ENCODE measurements at regions of chr19 and their contacts with region 1.

Region 1: DNA sequence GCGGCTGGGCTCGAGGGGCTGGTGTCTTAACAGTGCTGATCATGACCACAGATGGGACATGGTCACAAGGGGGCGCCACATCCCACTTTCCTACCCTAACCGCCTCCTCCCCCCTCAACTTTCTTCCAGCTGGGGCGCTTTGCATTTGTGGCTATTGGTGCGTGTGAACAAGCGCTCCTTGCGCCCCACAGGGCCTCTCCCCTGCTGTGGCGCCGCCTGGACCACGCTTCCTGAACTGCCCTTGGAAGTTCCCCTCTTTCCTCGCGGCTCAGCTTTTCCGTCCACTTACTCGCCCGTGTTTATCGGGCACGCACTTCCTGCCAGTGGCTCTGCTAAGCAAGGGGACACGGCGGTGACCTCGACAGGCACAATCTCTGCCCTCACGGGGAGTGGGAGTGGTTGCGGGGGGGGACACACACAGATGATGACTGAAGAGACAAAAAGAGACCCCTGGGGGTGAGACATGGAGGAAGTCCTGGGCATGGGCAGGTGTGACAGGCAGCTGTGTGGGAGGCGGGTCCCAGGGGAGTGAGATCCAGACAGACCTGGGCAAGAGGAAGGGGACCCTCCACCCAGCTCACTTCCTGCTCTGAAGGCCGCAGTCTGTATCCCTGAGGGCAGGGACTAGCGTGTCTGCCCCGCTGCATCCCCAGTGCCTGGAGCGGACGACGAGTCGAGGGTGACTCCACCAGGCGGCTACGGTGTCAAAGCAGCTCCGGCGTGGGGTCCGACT is 40.3 kb downstream of the ZNF787 start:
- DNase-seq: peak; percentile 46 to 77 (median 67)
- ATAC-seq: peak; percentile 67
- H3K4me3 ChIP-seq: peak overlapping the region; percentile 41 to 46
- H3K4me3 Mint-ChIP-seq: peak overlapping the region; percentile 76
- H3K27ac ChIP-seq: no peak overlapping the region
- H3K27ac Mint-ChIP-seq: no peak overlapping the region
- H3K4me1 ChIP-seq: peaks cover 8% of the 10 kb centered on the region
- H3K4me1 Mint-ChIP-seq: peaks cover 9% of the 10 kb centered on the region
- H3K27me3 ChIP-seq: no peaks in the 10 kb centered on the region
- H3K27me3 Mint-ChIP-seq: peaks cover 12% of the 10 kb centered on the region
- CTCF ChIP-seq: no peak

Region 2: DNA sequence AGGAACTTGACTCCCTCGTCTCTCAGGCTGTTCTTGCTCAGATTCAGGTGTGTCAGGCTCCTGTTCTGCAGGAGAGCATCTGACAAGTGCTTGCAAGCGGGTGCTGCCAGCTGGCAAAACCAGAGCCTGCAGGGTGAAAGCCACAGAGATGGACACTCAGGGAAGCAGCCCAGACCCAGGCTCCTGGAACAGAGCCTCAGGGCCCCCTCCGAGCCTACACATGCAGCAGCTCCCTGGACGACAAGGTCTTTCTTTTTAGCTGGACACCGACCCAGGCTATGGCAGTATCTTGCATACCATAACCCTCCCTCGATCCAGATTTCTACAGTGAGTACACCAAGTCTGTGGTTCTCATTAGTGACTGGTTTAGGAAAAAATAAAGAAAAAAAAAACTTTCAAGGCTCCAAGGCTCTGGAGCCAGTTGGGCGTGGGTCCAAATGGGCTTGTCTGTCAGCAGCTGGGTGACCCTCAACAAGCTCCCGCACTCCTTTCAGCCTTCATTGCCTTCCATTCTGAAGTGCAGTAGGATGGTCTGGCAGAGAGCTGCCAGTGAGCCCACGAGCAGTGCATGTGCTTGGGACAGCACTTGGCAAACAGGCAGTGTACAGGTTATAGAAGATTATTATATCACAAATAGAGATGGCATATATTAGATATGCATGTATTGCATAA is 178.6 kb before region 1 on chr19:
- CTCF ChIA-PET with region 1: no interaction called
- POLR2A ChIA-PET with region 1: no interaction called
- intact Hi-C with region 1: no loop called
- DNase-seq: no peak
- ATAC-seq: no peak
- H3K4me3 ChIP-seq: no peak overlapping the region
- H3K4me3 Mint-ChIP-seq: no peak overlapping the region
- H3K27ac ChIP-seq: no peak overlapping the region
- H3K27ac Mint-ChIP-seq: no peak overlapping the region
- H3K4me1 ChIP-seq: no peaks in the 10 kb centered on the region
- H3K4me1 Mint-ChIP-seq: no peaks in the 10 kb centered on the region
- H3K27me3 ChIP-seq: no peaks in the 10 kb centered on the region
- H3K27me3 Mint-ChIP-seq: peaks cover 3% of the 10 kb centered on the region
- CTCF ChIP-seq: no peak

Region 3: DNA sequence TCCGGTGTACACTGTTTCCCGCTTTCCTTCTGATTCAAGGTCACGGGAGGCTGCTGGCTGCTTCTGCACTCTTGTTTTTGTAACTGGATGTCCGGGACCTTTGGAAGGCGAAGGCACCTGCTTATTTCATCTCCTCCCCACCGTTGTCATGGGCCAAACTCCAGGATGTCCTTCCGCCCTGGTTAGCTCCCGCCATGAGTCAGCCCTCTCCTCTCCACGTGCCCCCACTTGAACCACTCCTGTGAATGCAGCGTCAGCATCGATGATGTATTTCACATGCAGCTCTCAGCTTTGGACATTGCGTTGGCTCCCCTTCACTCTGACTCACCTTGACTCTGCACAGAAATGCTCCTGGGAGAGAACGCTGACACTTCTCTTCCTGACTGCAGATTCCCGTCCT is 89.4 kb after region 1 on chr19:
- CTCF ChIA-PET with region 1: interaction called, 36 read pairs
- POLR2A ChIA-PET with region 1: no interaction called
- intact Hi-C with region 1: loop called (anchors 1 to 2 kb)
- DNase-seq: no peak
- ATAC-seq: no peak
- H3K4me3 ChIP-seq: no peak overlapping the region
- H3K4me3 Mint-ChIP-seq: no peak overlapping the region
- H3K27ac ChIP-seq: no peak overlapping the region
- H3K27ac Mint-ChIP-seq: no peak overlapping the region
- H3K4me1 ChIP-seq: no peaks in the 10 kb centered on the region
- H3K4me1 Mint-ChIP-seq: peaks cover 2% of the 10 kb centered on the region
- H3K27me3 ChIP-seq: no peaks in the 10 kb centered on the region
- H3K27me3 Mint-ChIP-seq: peaks cover 8% of the 10 kb centered on the region
- CTCF ChIP-seq: no peak

Region 4: DNA sequence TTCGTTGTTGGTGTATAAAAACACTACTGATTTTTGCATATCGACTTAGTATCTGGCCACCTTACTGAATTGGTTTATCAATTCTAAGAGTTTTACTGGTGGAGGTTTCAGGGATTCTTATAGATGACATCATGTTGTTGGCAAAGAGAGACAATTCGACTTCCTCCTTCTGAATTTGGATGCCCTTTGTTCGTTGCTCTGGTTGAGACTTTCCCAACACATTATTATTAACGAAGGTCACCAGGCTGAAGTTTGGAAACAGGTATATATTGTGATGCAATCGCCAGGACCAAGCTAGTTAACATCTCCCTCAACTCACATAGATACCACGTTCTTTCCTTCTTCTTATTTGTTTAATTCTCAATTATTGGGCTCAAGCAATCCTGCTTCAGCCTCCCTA is 118.9 kb after region 1 on chr19:
- CTCF ChIA-PET with region 1: no interaction called
- POLR2A ChIA-PET with region 1: no interaction called
- intact Hi-C with region 1: no loop called
- DNase-seq: no peak
- ATAC-seq: no peak
- H3K4me3 ChIP-seq: no peak overlapping the region
- H3K4me3 Mint-ChIP-seq: no peak overlapping the region
- H3K27ac ChIP-seq: no peak overlapping the region
- H3K27ac Mint-ChIP-seq: no peak overlapping the region
- H3K4me1 ChIP-seq: no peaks in the 10 kb centered on the region
- H3K4me1 Mint-ChIP-seq: no peaks in the 10 kb centered on the region
- H3K27me3 ChIP-seq: no peaks in the 10 kb centered on the region
- H3K27me3 Mint-ChIP-seq: peaks cover 3% of the 10 kb centered on the region
- CTCF ChIP-seq: no peak

Region 5: GRCh38 chr19:56261145-56261544 is 180.3 kb after region 1 on chr19:
- CTCF ChIA-PET with region 1: no interaction called
- POLR2A ChIA-PET with region 1: no interaction called
- intact Hi-C with region 1: no loop called
- DNase-seq: no peak
- ATAC-seq: no peak
- H3K4me3 ChIP-seq: no peak overlapping the region
- H3K4me3 Mint-ChIP-seq: no peak overlapping the region
- H3K27ac ChIP-seq: no peak overlapping the region
- H3K27ac Mint-ChIP-seq: no peak overlapping the region
- H3K4me1 ChIP-seq: no peaks in the 10 kb centered on the region
- H3K4me1 Mint-ChIP-seq: no peaks in the 10 kb centered on the region
- H3K27me3 ChIP-seq: no peaks in the 10 kb centered on the region
- H3K27me3 Mint-ChIP-seq: no peaks in the 10 kb centered on the region
- CTCF ChIP-seq: no peak

Region 6: GRCh38 chr19:56350416-56351045 is 269.7 kb after region 1 on chr19:
- CTCF ChIA-PET with region 1: interaction called, 18 read pairs
- POLR2A ChIA-PET with region 1: no interaction called
- intact Hi-C with region 1: loop called in 1 of 2 experiments (anchors 1 kb)
- DNase-seq: peak in 8 of 9 experiments; percentile 14 to 71 (median 55)
- ATAC-seq: peak; percentile 68
- H3K4me3 ChIP-seq: no peak overlapping the region
- H3K4me3 Mint-ChIP-seq: no peak overlapping the region
- H3K27ac ChIP-seq: no peak overlapping the region
- H3K27ac Mint-ChIP-seq: no peak overlapping the region
- H3K4me1 ChIP-seq: no peaks in the 10 kb centered on the region
- H3K4me1 Mint-ChIP-seq: peaks cover 2% of the 10 kb centered on the region
- H3K27me3 ChIP-seq: no peaks in the 10 kb centered on the region
- H3K27me3 Mint-ChIP-seq: no peaks in the 10 kb centered on the region
- CTCF ChIP-seq: peak; percentile 96

Region 7: GRCh38 chr19:57103573-57104277 is 1022.9 kb after region 1 on chr19:
- CTCF ChIA-PET with region 1: no interaction called
- POLR2A ChIA-PET with region 1: no interaction called
- intact Hi-C with region 1: loop called in 1 of 2 experiments (anchors 5 kb)
- DNase-seq: peak; percentile 14 to 79 (median 59)
- ATAC-seq: peak; percentile 97
- H3K4me3 ChIP-seq: peak overlapping the region in 1 of 2 experiments; percentile 11
- H3K4me3 Mint-ChIP-seq: peak overlapping the region; percentile 70
- H3K27ac ChIP-seq: no peak overlapping the region
- H3K27ac Mint-ChIP-seq: no peak overlapping the region
- H3K4me1 ChIP-seq: peaks cover 4% of the 10 kb centered on the region
- H3K4me1 Mint-ChIP-seq: peaks cover 6% of the 10 kb centered on the region
- H3K27me3 ChIP-seq: peaks cover 0 to 4% of the 10 kb centered on the region in 2 experiments
- H3K27me3 Mint-ChIP-seq: peaks cover 26% of the 10 kb centered on the region
- CTCF ChIP-seq: peak; percentile 82